Activated naive CD4-positive, alpha-beta T cell treated with anti-CD3 and anti-CD28 coated beads for 36 hours (primary cell): ENCODE measurements at regions of chr11 and their contacts with region 1.

Region 1: GRCh38 chr11:68271781-68272608 is at the start of gene C11orf24:
- DNase-seq: peak; percentile 93
- H3K4me3 Mint-ChIP-seq: peak within 1 kb of the TSS; percentile 96
- H3K27ac Mint-ChIP-seq: peak within 1 kb of the TSS; percentile 90
- H3K4me1 Mint-ChIP-seq: peaks cover 34% of the 10 kb centered on the region
- H3K27me3 Mint-ChIP-seq: no peaks in the 10 kb centered on the region
- total RNA-seq, gene C11orf24: 28.5 to 29.5 TPM

Region 2: DNA sequence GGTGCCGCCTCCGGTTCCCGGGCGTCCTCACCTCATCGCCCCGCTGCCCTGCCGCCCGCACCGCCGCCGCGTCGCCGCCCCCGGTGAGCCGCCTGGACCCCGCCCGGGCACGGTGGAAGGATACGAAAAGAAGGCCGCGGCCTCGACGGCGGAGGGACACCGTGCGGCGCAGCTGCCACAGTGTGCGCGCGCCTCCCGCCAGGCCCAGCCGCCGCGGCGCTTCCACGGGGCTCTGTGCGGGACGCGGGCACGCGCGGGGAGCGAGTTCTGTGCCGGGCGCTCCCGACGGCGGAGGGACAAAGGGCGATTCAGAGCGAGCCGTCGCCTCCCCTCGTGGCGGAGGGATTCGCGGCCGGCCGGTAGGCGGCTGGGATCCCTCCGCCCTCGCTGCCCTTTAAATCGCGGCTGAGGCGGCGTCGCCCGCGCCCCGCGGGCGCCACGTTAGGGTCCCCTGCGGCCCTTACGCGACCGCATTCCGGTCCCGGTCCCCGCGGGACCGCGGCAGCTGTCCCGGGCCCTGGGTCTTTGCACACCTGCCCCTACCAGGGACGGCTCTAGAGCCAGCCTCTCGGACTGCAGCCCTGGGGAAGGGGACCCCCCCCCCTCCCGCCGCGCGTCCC is 58.3 kb before region 1 on chr11:
- CTCF ChIA-PET with region 1: interaction called, 5 read pairs
- intact Hi-C with region 1: loop called (anchors 2 kb)
- DNase-seq: peak; percentile 71
- H3K4me3 Mint-ChIP-seq: peak overlapping the region; percentile 73
- H3K27ac Mint-ChIP-seq: no peak overlapping the region
- H3K4me1 Mint-ChIP-seq: peaks cover 42% of the 10 kb centered on the region
- H3K27me3 Mint-ChIP-seq: peaks cover 7% of the 10 kb centered on the region

Region 3: DNA sequence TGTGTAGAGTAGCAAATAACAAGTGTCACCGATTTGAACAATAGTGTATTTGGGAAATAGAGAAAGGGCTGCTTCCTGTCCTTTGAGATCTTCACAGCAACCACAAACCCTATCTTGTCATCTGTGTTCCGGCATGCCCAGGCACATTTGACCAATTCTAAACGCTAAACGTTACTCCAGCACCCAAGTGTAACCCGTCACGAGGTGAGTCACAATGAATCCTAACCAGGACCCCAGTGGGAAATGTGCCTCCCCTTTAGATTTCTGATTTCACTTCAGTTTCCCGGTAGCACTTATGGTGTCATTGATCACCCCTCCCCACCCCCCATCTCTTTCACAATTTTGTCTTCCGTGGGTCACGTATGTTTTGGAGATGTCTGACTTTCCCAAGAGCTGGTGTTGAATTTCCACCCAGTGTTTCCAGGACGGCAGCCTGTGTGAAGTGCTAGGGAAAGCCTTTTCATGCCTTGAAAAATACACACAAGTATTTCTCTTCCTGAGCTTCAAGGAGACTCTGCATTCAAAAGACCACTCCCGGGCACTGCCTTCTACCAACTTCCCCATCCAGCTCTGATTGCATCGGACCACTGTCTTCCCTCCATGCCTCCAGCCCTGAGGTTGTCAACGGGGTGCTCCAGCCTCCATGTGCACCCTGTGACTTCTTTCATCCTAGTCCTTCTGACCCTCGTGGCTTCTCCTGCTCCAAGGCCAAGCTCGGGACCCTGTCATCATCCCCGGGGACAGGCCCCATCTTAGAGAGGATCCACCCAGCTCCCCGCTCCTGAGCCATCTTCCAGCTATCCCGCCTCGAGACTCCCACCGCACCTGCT is 10.4 kb after region 1 on chr11:
- CTCF ChIA-PET with region 1: no interaction called
- intact Hi-C with region 1: loop called (anchors 1 kb)
- DNase-seq: peak; percentile 83
- H3K4me3 Mint-ChIP-seq: peak overlapping the region; percentile 62
- H3K27ac Mint-ChIP-seq: peak overlapping the region; percentile 79
- H3K4me1 Mint-ChIP-seq: peaks cover 26% of the 10 kb centered on the region
- H3K27me3 Mint-ChIP-seq: no peaks in the 10 kb centered on the region